Mammary epithelial cell (primary cell): ENCODE measurements at regions of chr5 and their contacts with region 1.

Region 1: GRCh38 chr5:132277971-132278911 is 16.0 kb upstream of the SLC22A4 start:
- DNase-seq: no peak
- H3K4me3 ChIP-seq: no peak overlapping the region
- H3K27ac ChIP-seq: no peak overlapping the region
- H3K4me1 ChIP-seq: no peaks in the 10 kb centered on the region
- H3K27me3 ChIP-seq: no peaks in the 10 kb centered on the region
- CTCF ChIP-seq: no peak

Region 2: DNA sequence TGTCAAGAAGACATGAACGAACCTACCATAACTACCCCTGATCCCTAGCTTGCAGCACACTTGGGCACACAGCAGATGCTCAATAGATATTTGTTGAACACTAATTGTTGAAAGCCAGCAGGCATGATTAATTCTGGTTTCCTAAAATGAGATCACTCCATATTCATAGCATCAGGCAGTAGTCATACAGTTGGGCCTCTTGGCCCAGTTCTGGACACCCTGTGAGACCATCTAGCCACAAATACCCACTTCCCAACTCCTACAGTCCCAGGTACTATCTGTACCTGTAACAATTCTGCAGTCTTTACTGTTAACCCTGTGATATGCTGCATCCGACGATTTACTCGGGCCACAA is 74.8 kb before region 1 on chr5:
- CTCF ChIA-PET with region 1: no interaction called
- dilution Hi-C with region 1: loop called (anchors 5 kb)
- in situ Hi-C with region 1: no loop called
- intact Hi-C with region 1: no loop called
- DNase-seq: no peak
- H3K4me3 ChIP-seq: no peak overlapping the region
- H3K27ac ChIP-seq: no peak overlapping the region
- H3K4me1 ChIP-seq: no peaks in the 10 kb centered on the region
- H3K27me3 ChIP-seq: no peaks in the 10 kb centered on the region
- CTCF ChIP-seq: no peak

Region 3: DNA sequence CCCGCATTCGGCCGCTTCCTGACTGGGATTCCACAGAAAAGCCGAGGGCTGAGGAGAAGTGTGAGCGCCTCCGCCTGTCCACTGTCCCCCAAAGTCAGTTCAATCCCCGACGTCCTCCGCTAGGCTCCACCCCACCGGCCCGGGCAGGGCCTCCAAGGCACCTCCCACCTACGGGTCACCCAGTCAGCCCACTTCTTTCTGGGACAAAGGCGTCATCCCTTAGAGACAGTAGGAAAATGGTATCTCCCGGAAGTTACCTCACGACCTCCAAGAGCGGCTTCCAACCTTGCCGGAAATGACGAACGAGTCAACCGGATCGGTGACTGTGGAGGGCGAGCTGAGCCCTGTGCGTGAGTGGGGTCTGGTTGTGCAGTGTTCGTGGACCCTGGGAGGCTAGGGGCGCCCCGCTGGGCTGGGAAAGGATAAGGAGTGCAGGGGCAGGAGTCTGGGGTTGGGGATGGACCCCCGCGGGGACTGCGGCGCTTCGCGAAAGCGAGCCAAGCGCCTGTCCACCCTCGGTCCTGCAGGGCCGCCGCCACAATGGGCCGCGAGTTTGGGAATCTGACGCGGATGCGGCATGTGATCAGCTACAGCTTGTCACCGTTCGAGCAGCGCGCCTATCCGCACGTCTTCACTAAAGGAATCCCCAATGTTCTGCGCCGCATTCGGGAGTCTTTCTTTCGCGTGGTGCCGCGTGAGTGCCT is 588.3 kb after region 1 on chr5 and contains the starts of genes GDF9 and UQCRQ:
- CTCF ChIA-PET with region 1: no interaction called
- dilution Hi-C with region 1: no loop called
- in situ Hi-C with region 1: no loop called
- intact Hi-C with region 1: no loop called
- DNase-seq: peak; percentile 99
- H3K4me3 ChIP-seq: peak within 1 kb of the TSS; percentile 71 to 90 (median 88)
- H3K27ac ChIP-seq: peak within 1 kb of the TSS; percentile 77
- H3K4me1 ChIP-seq: no peaks in the 10 kb centered on the region
- H3K27me3 ChIP-seq: no peaks in the 10 kb centered on the region
- CTCF ChIP-seq: peak in 1 of 2 donors; percentile 50
- total RNA-seq, gene GDF9: 0.50 to 0.66 TPM
- total RNA-seq, gene UQCRQ: 45.3 to 461 TPM